ENCODE measurements at regions of chr13 and their contacts with region 1.

Region 1: DNA sequence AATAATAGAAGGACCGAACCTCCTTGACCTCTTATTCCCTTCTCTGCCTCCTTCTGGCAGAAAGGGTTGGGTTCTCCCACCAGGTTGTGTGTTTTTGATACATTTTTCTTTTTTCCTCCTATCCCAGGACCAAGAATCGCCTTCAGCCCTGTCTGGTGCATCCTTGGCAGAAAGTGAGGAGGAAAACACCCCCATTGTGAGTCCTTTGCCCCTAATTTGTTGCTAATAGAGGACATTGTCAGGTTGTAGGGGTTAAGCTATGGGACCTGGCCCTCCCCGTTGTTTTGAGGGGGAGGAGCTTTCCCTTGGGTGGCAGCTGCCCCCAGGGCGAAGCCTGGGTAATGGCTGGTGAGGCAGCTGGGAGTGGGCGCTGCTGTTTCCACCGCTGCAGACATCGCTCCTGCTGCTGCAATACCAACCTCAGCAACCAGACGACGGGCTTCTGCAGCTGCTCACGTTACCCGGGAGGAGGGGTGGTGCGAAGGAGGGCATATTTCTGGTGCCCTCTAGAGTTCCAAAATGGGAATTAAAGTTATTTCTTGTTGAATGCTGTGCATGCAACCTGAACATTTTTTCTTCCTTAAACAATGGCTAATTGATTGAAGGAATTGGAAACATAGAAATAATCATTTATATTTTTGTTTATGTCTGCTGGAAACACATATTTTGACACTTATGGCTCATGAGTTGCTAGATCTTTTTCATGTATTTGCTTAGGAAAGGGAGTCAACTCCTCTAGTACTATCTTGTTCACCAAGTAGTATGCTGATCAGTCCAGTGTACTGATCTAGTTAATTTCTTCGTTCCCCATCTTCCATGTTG is 1.5 kb downstream of the ZMYM2 start:
- DNase-seq: peak; percentile 85 to 94 (median 89)
- H3K4me3 ChIP-seq: peak overlapping the region; percentile 51 to 53
- H3K4me3 Mint-ChIP-seq: peak overlapping the region; percentile 93 to 98 (median 94)
- H3K27ac ChIP-seq: peak overlapping the region; percentile 90
- H3K27ac Mint-ChIP-seq: peak overlapping the region; percentile 93 to 99 (median 96)
- H3K4me1 ChIP-seq: peaks cover 50% of the 10 kb centered on the region
- H3K4me1 Mint-ChIP-seq: peaks cover 20 to 40% (median 31%) of the 10 kb centered on the region in 4 donors
- H3K27me3 ChIP-seq: no peaks in the 10 kb centered on the region
- H3K27me3 Mint-ChIP-seq: no peaks in the 10 kb centered on the region

Region 2: GRCh38 chr13:19587635-19588300 is 372.3 kb before region 1 on chr13:
- CTCF ChIA-PET with region 1: no interaction called
- POLR2A ChIA-PET with region 1: no interaction called
- intact Hi-C with region 1: loop called (anchors 1 kb)
- DNase-seq: peak; percentile 39 to 56 (median 47)
- H3K4me3 ChIP-seq: no peak overlapping the region
- H3K4me3 Mint-ChIP-seq: peak overlapping the region in 7 of 8 donors; percentile 66 to 88 (median 79)
- H3K27ac ChIP-seq: peak overlapping the region; percentile 23
- H3K27ac Mint-ChIP-seq: peak overlapping the region; percentile 80 to 94 (median 84)
- H3K4me1 ChIP-seq: peaks cover 22% of the 10 kb centered on the region
- H3K4me1 Mint-ChIP-seq: peaks cover 19 to 25% (median 23%) of the 10 kb centered on the region in 4 donors
- H3K27me3 ChIP-seq: no peaks in the 10 kb centered on the region
- H3K27me3 Mint-ChIP-seq: no peaks in the 10 kb centered on the region

Region 3: GRCh38 chr13:19633479-19634255 is 326.4 kb before region 1 on chr13 and contains the start of gene MPHOSPH8:
- CTCF ChIA-PET with region 1: no interaction called
- POLR2A ChIA-PET with region 1: interaction called, 4 read pairs
- intact Hi-C with region 1: loop called (anchors 1 kb)
- DNase-seq: peak; percentile 92 to 93 (median 93)
- H3K4me3 ChIP-seq: peak within 1 kb of the TSS; percentile 71 to 90
- H3K4me3 Mint-ChIP-seq: peak within 1 kb of the TSS; percentile 100
- H3K27ac ChIP-seq: peak within 1 kb of the TSS; percentile 94
- H3K27ac Mint-ChIP-seq: peak within 1 kb of the TSS; percentile 95 to 100 (median 99)
- H3K4me1 ChIP-seq: peaks cover 42% of the 10 kb centered on the region
- H3K4me1 Mint-ChIP-seq: peaks cover 26 to 52% (median 34%) of the 10 kb centered on the region in 4 donors
- H3K27me3 ChIP-seq: no peaks in the 10 kb centered on the region
- H3K27me3 Mint-ChIP-seq: peaks cover 0 to 4% of the 10 kb centered on the region in 2 donors
- total RNA-seq, gene MPHOSPH8: 131 to 136 TPM

Region 4: DNA sequence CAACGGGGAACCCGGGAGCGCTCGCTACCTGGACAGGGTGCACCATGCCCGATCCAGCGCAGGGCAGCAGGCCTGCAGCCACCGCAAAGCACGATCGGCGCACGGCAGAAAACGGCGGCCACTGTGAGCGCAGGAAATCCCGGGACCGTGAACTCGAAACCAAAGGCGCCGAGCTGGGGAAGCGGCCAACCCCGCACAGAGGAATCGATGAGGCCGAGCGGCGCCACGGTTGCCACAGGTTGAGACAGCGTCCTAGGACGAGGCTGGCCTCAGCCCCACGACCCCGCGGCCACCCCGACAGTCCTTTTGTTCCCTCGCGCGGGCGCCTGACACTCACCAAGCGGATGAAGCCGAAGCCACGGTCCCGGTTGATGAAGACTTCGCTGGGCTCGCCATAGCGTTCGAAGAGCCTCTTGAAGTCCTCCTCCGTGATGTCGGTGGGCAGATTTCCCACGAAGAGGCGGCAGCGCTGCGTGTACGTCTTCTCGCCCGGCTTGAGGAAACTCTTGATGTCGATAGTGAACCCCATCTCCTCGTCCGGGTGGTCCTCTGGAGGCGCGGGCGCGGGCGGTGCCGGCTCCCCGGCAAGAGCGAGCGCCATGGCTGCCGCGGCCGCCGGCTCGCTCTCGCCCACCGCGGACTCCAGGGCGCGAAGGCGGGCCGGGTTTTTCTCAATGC is 177.9 kb before region 1 on chr13:
- CTCF ChIA-PET with region 1: interaction called, 3 read pairs
- POLR2A ChIA-PET with region 1: interaction called, 7 read pairs
- intact Hi-C with region 1: loop called (anchors 1 kb)
- DNase-seq: peak; percentile 52 to 57 (median 55)
- H3K4me3 ChIP-seq: peak overlapping the region; percentile 93 to 95
- H3K4me3 Mint-ChIP-seq: peak overlapping the region; percentile 97 to 99 (median 98)
- H3K27ac ChIP-seq: peak overlapping the region; percentile 88
- H3K27ac Mint-ChIP-seq: peak overlapping the region; percentile 98 to 99 (median 99)
- H3K4me1 ChIP-seq: peaks cover 6% of the 10 kb centered on the region
- H3K4me1 Mint-ChIP-seq: peaks cover 2 to 14% (median 5%) of the 10 kb centered on the region in 4 donors
- H3K27me3 ChIP-seq: no peaks in the 10 kb centered on the region
- H3K27me3 Mint-ChIP-seq: no peaks in the 10 kb centered on the region

Region 5: GRCh38 chr13:19927117-19927748 is 32.8 kb before region 1 on chr13:
- CTCF ChIA-PET with region 1: interaction called, 9 read pairs
- POLR2A ChIA-PET with region 1: no interaction called
- intact Hi-C with region 1: loop called (anchors 1 kb)
- DNase-seq: peak in 4 of 5 donors; percentile 26 to 37 (median 29)
- H3K4me3 ChIP-seq: no peak overlapping the region
- H3K4me3 Mint-ChIP-seq: no peak overlapping the region
- H3K27ac ChIP-seq: no peak overlapping the region
- H3K27ac Mint-ChIP-seq: peak overlapping the region in 1 of 7 donors; percentile 76
- H3K4me1 ChIP-seq: no peaks in the 10 kb centered on the region
- H3K4me1 Mint-ChIP-seq: peaks cover 0 to 5% (median 4%) of the 10 kb centered on the region in 4 donors
- H3K27me3 ChIP-seq: no peaks in the 10 kb centered on the region
- H3K27me3 Mint-ChIP-seq: no peaks in the 10 kb centered on the region

Region 6: GRCh38 chr13:20127577-20128466 is 167.8 kb after region 1 on chr13:
- CTCF ChIA-PET with region 1: interaction called, 3 read pairs
- POLR2A ChIA-PET with region 1: no interaction called
- intact Hi-C with region 1: loop called (anchors 5 kb)
- DNase-seq: peak in 4 of 5 donors; percentile 32 to 48 (median 38)
- H3K4me3 ChIP-seq: peak overlapping the region; percentile 42 to 52
- H3K4me3 Mint-ChIP-seq: peak overlapping the region; percentile 64 to 83 (median 72)
- H3K27ac ChIP-seq: no peak overlapping the region
- H3K27ac Mint-ChIP-seq: peak overlapping the region in 1 of 7 donors; percentile 63
- H3K4me1 ChIP-seq: peaks cover 8% of the 10 kb centered on the region
- H3K4me1 Mint-ChIP-seq: peaks cover 0 to 6% (median 1%) of the 10 kb centered on the region in 4 donors
- H3K27me3 ChIP-seq: peaks cover 15% of the 10 kb centered on the region
- H3K27me3 Mint-ChIP-seq: peaks cover 6 to 19% of the 10 kb centered on the region in 2 donors

Region 7: DNA sequence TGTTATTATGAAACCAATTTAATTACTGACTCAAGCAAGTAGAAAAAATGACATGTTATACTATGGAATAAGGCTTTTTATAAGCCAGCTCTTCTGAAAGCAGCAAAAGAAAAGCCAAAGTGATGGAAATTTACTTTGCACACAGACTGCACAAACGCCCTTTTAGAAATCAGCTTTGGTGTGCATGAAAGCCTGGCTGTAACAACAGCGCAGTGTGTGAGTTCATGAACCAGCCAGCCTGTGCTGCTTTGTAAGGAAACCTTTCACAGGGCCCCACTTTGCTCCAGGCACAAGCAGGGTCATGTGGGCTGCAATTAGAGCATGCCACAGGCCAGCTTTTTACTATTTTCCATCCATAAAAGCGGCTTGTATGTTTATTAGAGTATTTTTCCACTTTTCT is 593.3 kb after region 1 on chr13:
- CTCF ChIA-PET with region 1: no interaction called
- POLR2A ChIA-PET with region 1: no interaction called
- intact Hi-C with region 1: no loop called
- DNase-seq: no peak
- H3K4me3 ChIP-seq: no peak overlapping the region
- H3K4me3 Mint-ChIP-seq: no peak overlapping the region
- H3K27ac ChIP-seq: no peak overlapping the region
- H3K27ac Mint-ChIP-seq: no peak overlapping the region
- H3K4me1 ChIP-seq: no peaks in the 10 kb centered on the region
- H3K4me1 Mint-ChIP-seq: no peaks in the 10 kb centered on the region
- H3K27me3 ChIP-seq: no peaks in the 10 kb centered on the region
- H3K27me3 Mint-ChIP-seq: no peaks in the 10 kb centered on the region

Region 8: DNA sequence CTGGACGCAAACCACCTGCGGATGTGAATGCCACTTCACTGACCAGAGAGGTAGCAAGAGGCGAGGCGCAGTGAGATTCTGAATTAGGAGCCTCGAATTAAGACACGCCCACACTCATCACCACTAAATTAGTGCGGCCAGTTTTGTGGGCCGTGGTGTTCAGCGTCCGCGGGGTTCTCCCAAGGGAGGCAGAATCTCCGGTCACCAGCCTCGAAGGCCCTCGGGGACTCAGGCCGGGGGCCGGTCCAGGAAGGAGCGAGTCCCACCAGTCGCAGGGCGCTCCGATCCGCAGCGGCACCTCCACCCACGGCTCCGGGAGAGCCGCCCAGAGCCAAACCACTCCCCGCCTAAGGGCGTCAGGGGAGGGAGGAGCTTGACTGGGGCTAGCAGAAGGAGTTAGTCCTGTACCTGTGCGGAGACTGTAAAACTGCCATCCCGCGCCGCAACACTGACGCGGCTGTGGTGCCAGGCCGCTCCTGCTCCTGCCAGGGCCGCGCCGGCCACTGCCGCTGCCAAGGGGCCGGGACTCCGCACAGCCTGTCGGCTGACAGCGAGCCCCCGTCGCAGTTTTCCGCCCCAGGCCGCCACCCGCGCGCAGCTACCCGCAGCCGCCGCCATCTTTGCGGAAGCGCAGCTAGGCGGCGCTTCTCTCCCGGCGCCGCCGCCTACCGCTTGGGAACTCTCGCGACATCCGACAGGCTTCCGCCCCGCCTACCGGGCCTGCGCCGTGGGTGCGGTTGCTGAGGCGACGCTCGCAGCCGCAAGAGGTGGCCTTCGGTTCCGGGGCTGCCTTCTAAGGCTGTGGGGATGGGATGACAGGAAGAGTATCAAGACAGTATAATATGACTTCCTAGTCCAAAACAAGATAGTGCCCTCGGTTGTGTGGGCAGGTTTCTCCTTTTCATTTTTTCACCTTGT is 1643.7 kb after region 1 on chr13 and contains the start of gene MICU2:
- CTCF ChIA-PET with region 1: no interaction called
- POLR2A ChIA-PET with region 1: interaction called, 3 read pairs
- intact Hi-C with region 1: loop called (anchors 10 kb)
- DNase-seq: peak; percentile 96 to 97 (median 97)
- H3K4me3 ChIP-seq: peak within 1 kb of the TSS; percentile 78 to 83
- H3K4me3 Mint-ChIP-seq: peak within 1 kb of the TSS; percentile 86 to 97 (median 89)
- H3K27ac ChIP-seq: peak within 1 kb of the TSS; percentile 85
- H3K27ac Mint-ChIP-seq: peak within 1 kb of the TSS; percentile 90 to 97 (median 95)
- H3K4me1 ChIP-seq: peaks cover 36% of the 10 kb centered on the region
- H3K4me1 Mint-ChIP-seq: peaks cover 28 to 58% (median 36%) of the 10 kb centered on the region in 4 donors
- H3K27me3 ChIP-seq: no peaks in the 10 kb centered on the region
- H3K27me3 Mint-ChIP-seq: peaks cover 4% of the 10 kb centered on the region in 2 donors
- total RNA-seq, gene MICU2: 46.0 to 50.3 TPM